ENCODE measurements at regions of chr19 and their contacts with region 1.

Region 1: GRCh38 chr19:13597640-13598039 is 91.4 kb upstream of the CACNA1A start:
- DNase-seq: peak; percentile 35
- ATAC-seq: peak; percentile 76
- H3K4me3 ChIP-seq: no peak overlapping the region
- H3K27ac ChIP-seq: no peak overlapping the region
- H3K4me1 ChIP-seq: no peaks in the 10 kb centered on the region
- H3K27me3 ChIP-seq: peaks cover 1 to 10% of the 10 kb centered on the region in 2 experiments; a peak in 2 of 5 replicates
- CTCF ChIP-seq: peak; percentile 84
- EP300 ChIP-seq: no peak
- POLR2A ChIP-seq: no peak
- RAD21 ChIP-seq: peak; percentile 85

Region 2: GRCh38 chr19:13583114-13583513 is 14.5 kb before region 1 on chr19:
- CTCF ChIA-PET with region 1: no interaction called
- POLR2A ChIA-PET with region 1: no interaction called
- in situ Hi-C with region 1: no loop called
- intact Hi-C with region 1: no loop called
- DNase-seq: no peak
- ATAC-seq: no peak
- H3K4me3 ChIP-seq: no peak overlapping the region
- H3K27ac ChIP-seq: no peak overlapping the region
- H3K4me1 ChIP-seq: no peaks in the 10 kb centered on the region
- H3K27me3 ChIP-seq: no peaks in the 10 kb centered on the region
- CTCF ChIP-seq: no peak
- EP300 ChIP-seq: no peak
- POLR2A ChIP-seq: no peak
- RAD21 ChIP-seq: no peak

Region 3: GRCh38 chr19:13718733-13719132 is 121.1 kb after region 1 on chr19:
- CTCF ChIA-PET with region 1: interaction called, 20 read pairs
- POLR2A ChIA-PET with region 1: no interaction called
- in situ Hi-C with region 1: no loop called
- intact Hi-C with region 1: loop called (anchors 1 kb)
- DNase-seq: no peak
- ATAC-seq: no peak
- H3K4me3 ChIP-seq: no peak overlapping the region
- H3K27ac ChIP-seq: no peak overlapping the region
- H3K4me1 ChIP-seq: 0 out of 2 replicates have a peak, but pooled peaks cover 6% of the 10 kb centered on the region
- H3K27me3 ChIP-seq: peaks cover 0 to 17% of the 10 kb centered on the region in 2 experiments; a peak in 2 of 5 replicates
- CTCF ChIP-seq: peak; percentile 54
- EP300 ChIP-seq: no peak
- POLR2A ChIP-seq: no peak
- RAD21 ChIP-seq: no peak

Region 4: GRCh38 chr19:13861732-13862531 is 264.3 kb after region 1 on chr19:
- CTCF ChIA-PET with region 1: interaction called, 3 read pairs
- POLR2A ChIA-PET with region 1: no interaction called
- in situ Hi-C with region 1: no loop called
- intact Hi-C with region 1: loop called (anchors 5 kb)
- DNase-seq: peak; percentile 77
- ATAC-seq: peak; percentile 82
- H3K4me3 ChIP-seq: peak overlapping the region; percentile 67 to 77 (median 75)
- H3K27ac ChIP-seq: peak overlapping the region; percentile 54
- H3K4me1 ChIP-seq: peaks cover 36% of the 10 kb centered on the region
- H3K27me3 ChIP-seq: peaks cover 0 to 9% of the 10 kb centered on the region in 2 experiments; a peak in 1 of 5 replicates
- CTCF ChIP-seq: peak; percentile 95
- EP300 ChIP-seq: no peak
- POLR2A ChIP-seq: no peak
- RAD21 ChIP-seq: peak; percentile 97

Region 5: DNA sequence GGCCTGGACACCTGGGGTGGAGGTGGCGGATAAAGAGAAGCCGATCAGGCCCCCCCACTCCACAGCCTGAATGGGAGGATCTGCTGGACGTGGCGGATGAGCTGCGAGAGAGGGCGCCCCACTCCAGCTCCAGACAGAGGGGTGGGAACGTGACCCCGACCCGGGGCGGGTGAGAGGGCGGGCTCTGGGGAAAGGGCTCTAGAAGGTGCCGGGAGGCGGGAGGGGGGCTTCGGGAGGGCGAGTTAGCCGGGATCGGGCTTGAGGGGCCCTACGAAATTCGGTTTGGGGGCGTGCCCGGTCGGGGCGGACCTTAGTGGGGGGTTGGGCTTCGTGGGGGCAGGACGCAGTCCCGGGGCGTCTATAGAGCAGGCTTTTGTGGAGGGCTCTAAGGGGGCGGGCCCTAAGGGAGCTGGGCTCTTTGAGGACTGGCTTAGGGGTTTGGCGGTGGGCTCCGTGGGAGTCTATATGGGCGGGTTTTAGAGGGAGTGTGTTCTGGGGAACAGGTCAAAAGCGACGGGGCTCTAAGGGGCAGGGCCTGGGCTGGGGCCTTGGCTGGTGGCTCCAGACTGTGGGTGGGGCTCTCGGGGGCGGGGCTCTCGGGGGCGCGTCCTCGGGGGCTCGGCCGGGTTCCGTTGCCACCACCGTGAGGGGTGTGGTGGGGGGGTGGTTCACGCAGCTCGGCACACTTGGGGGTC is 275.2 kb after region 1 on chr19:
- CTCF ChIA-PET with region 1: no interaction called
- POLR2A ChIA-PET with region 1: no interaction called
- in situ Hi-C with region 1: loop called (anchors 10 kb)
- intact Hi-C with region 1: no loop called
- DNase-seq: no peak
- ATAC-seq: peak; percentile 72
- H3K4me3 ChIP-seq: peak overlapping the region; percentile 42 to 73 (median 54)
- H3K27ac ChIP-seq: no peak overlapping the region
- H3K4me1 ChIP-seq: peaks cover 19% of the 10 kb centered on the region
- H3K27me3 ChIP-seq: no peaks in the 10 kb centered on the region
- CTCF ChIP-seq: peak; percentile 71
- EP300 ChIP-seq: no peak
- POLR2A ChIP-seq: no peak
- RAD21 ChIP-seq: no peak

Measured in HepG2 (cell line).